Activated CD4-positive, alpha-beta memory T cell treated with anti-CD3 and anti-CD28 coated beads, Interleukin-2, amount 10 ng/mL, durations not matched to agents 7 days and 5 days (primary cell): ENCODE measurements at regions of chr10 and their contacts with region 1.

Region 1: DNA sequence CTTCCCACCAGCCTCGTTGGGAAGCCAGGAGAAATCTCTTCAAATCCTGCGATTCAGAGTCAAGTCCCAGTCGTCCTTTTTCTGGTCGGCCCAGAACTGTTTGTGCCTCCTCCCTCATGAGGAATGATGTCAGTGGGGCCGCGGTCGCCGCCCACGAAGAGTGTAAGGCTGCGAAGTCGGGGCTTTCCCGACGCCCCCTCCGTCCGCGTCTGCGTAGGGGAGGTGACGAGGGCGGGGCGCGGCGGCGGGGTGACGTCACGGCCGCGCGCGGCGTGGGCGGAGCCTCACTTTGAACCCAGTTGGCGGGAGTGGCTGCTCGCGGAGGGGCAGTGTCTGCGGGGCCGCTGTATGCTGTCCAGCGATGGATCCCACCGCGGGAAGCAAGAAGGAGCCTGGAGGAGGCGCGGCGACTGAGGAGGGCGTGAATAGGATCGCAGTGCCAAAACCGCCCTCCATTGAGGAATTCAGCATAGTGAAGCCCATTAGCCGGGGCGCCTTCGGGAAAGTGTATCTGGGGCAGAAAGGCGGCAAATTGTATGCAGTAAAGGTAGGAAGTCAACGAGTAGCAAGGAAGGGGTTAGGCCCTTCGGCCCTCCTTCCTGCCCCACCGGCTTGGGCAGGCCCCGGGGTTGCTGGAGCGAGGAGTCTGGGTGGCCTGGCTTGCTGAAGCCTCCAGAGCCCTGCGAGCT is at the start of gene MASTL:
- DNase-seq: peak; percentile 95
- H3K4me3 Mint-ChIP-seq: peak within 1 kb of the TSS; percentile 92
- H3K27ac Mint-ChIP-seq: peak within 1 kb of the TSS; percentile 100
- H3K4me1 Mint-ChIP-seq: peaks cover 47% of the 10 kb centered on the region
- H3K27me3 Mint-ChIP-seq: no peaks in the 10 kb centered on the region
- total RNA-seq, gene MASTL: 38.0 to 40.1 TPM

Region 2: DNA sequence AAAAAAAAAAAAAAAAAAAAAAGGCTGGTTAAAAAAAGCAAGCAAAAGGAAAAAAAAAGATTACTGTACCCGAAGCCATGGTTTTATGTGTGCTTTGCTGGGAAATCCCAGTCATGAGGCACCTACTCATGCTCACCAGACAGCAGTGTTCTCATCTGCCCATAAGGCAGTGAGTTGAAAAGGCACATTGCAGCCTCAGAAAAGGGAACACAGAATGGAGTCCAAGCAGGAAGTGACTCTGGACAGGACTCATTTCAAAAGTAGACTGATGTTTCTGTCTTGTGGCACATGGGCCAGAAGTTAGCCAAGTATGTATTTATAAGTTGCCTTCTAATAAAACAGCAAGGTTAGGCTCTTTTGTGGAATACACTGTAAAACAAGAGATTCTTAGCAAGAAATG is 417.5 kb before region 1 on chr10:
- CTCF ChIA-PET with region 1: no interaction called
- POLR2A ChIA-PET with region 1: interaction called, 17 read pairs
- DNase-seq: peak; percentile 60
- H3K4me3 Mint-ChIP-seq: no peak overlapping the region
- H3K27ac Mint-ChIP-seq: peak overlapping the region; percentile 90
- H3K4me1 Mint-ChIP-seq: peaks cover 67% of the 10 kb centered on the region
- H3K27me3 Mint-ChIP-seq: no peaks in the 10 kb centered on the region

Region 3: GRCh38 chr10:26770069-26770468 is 385.1 kb before region 1 on chr10:
- CTCF ChIA-PET with region 1: no interaction called
- POLR2A ChIA-PET with region 1: no interaction called
- DNase-seq: no peak
- H3K4me3 Mint-ChIP-seq: no peak overlapping the region
- H3K27ac Mint-ChIP-seq: no peak overlapping the region
- H3K4me1 Mint-ChIP-seq: peaks cover 8% of the 10 kb centered on the region
- H3K27me3 Mint-ChIP-seq: no peaks in the 10 kb centered on the region

Region 4: DNA sequence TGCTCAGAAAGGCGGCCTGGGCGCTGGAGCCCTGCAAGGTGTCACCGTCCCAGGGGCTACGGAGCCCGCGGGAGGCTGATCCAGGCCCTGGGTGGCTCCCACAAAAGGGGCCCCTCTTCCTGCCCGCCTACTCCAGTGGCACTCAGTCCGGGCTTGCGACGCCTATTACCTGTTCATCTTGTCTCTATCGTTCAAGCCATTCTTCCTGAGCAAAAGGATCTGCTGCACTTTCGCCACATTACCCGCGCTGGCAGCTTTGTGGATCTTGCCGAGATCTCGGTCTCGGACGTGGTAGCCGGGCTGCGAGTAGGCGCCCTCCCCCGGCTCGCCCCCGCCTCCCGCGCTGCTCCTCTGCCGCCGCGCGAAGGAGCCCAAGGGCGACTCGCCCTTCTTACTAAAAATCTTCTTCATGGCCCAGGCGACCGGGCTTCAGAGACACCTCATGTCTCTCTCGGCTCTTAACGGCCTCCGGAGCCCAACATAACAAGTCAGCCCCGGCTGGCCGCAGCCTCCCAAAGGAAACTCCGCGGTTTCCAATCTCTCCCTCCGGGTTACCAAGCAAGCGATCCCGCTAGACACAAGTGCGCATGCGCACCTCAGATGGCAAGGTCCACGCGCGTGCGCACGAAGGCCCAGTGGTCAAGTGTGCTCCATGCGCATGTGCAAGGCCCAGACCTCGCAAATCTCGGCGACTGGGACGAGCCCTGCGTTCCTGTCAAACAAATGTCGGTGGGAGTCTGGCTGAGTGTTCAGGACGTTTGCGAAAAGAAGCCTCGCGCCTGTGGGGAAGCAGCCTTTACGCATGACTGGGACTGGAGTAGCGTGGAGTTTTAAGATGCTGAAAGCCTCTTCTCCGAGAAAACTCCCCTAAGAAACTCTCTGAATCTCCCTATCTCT is 55.0 kb before region 1 on chr10 and contains the start of gene ANKRD26:
- CTCF ChIA-PET with region 1: no interaction called
- POLR2A ChIA-PET with region 1: interaction called, 32 read pairs
- DNase-seq: peak; percentile 96
- H3K4me3 Mint-ChIP-seq: peak within 1 kb of the TSS; percentile 83
- H3K27ac Mint-ChIP-seq: peak within 1 kb of the TSS; percentile 81
- H3K4me1 Mint-ChIP-seq: peaks cover 44% of the 10 kb centered on the region
- H3K27me3 Mint-ChIP-seq: no peaks in the 10 kb centered on the region
- total RNA-seq, gene ANKRD26: 5.2 to 6.1 TPM

Region 5: DNA sequence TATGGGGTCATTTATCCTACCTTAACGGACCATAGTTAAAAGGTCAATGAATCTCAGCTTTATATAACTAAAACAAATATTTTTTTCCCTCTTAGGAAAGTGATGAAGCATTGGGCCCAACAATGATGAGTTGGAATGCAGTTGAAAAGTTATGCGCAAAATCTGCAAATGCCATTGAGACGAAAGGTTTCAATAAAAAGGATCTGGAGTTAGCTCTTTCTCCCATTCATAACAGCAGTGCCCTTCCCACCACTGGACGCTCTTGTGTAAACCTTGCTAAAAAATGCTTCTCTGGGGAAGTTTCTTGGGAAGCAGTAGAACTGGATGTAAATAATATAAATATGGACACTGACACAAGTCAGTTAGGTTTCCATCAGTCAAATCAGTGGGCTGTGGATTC is 14.6 kb after region 1 on chr10:
- CTCF ChIA-PET with region 1: interaction called, 5 read pairs
- POLR2A ChIA-PET with region 1: interaction called, 11 read pairs
- DNase-seq: no peak
- H3K4me3 Mint-ChIP-seq: no peak overlapping the region
- H3K27ac Mint-ChIP-seq: no peak overlapping the region
- H3K4me1 Mint-ChIP-seq: peaks cover 9% of the 10 kb centered on the region
- H3K27me3 Mint-ChIP-seq: no peaks in the 10 kb centered on the region

Region 6: DNA sequence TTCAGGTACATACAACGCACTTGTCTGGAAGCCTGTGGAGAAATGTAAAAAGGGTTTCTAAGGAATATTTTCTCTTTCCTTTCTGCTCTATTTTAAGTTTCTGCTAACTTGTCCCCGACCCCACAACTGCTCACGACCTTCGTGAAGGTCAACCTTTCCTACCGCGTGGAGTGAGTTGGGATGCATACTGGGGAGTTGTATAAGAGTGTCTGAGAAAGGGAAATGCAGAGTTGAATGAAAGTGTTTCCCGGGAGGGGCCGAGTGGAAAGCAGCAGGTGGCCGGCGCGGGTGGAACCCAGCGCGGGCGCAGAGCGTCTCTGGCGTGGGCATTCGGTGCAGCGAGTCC is 103.3 kb after region 1 on chr10:
- CTCF ChIA-PET with region 1: interaction called, 3 read pairs
- POLR2A ChIA-PET with region 1: interaction called, 10 read pairs
- DNase-seq: no peak
- H3K4me3 Mint-ChIP-seq: peak overlapping the region; percentile 68
- H3K27ac Mint-ChIP-seq: no peak overlapping the region
- H3K4me1 Mint-ChIP-seq: peaks cover 27% of the 10 kb centered on the region
- H3K27me3 Mint-ChIP-seq: peaks cover 49% of the 10 kb centered on the region